Naive thymus-derived CD4-positive, alpha-beta T cell (primary cell): ENCODE measurements at regions of chr19 and their contacts with region 1.

Region 1: GRCh38 chr19:16076154-16076957 is at the start of gene TPM4:
- DNase-seq: peak; percentile 43 to 89 (median 50)
- ATAC-seq: peak; percentile 68
- H3K4me3 ChIP-seq: peak within 1 kb of the TSS; percentile 82
- H3K4me3 Mint-ChIP-seq: peak within 1 kb of the TSS; percentile 84 to 97 (median 90)
- H3K27ac ChIP-seq: peak within 1 kb of the TSS; percentile 89
- H3K27ac Mint-ChIP-seq: peak within 1 kb of the TSS; percentile 90 to 99 (median 97)
- H3K4me1 ChIP-seq: peaks cover 29 to 72% of the 10 kb centered on the region in 2 donors
- H3K4me1 Mint-ChIP-seq: peaks cover 54 to 80% (median 65%) of the 10 kb centered on the region in 7 donors
- H3K27me3 ChIP-seq: no peaks in the 10 kb centered on the region
- H3K27me3 Mint-ChIP-seq: no peaks in the 10 kb centered on the region
- total RNA-seq, gene TPM4: 65.8 to 435 (median 126) TPM

Region 2: DNA sequence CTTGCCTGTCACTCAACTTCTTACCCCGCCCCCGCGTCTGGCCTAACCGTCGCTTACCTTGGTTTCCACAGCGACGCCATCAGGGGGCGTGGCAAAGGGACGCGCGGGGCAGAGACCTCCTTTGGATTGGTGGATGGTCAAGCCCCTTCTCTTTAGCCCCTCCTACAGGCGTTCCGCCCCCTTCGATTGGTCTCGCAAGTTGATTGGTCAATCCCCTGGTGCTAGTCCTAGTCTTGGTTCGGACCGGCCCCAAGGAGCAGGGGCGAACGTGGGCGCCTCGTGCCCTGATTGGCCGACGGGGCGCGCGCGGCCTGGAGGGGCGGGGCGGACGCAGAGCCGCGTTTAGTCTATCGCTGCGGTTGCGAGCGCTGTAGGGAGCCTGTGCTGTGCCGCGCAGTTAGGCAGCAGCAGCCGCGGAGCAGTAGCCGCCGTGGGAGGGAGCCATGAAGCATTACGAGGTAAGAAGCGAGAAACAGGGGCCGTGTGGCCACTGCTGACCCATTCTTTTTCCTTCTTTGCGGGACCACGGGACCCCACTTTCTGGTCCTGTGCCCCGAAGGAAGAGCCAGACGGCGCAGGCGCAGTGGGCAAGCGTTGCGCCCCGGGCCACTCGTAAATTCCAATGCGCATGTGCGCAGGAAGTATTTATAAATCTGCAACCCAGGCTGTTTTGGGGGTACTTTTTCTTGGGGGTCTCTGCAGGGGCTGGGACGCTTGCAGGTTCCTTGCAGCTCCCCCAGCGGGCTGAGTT is 1546.9 kb before region 1 on chr19 and contains the start of gene TECR:
- CTCF ChIA-PET with region 1: no interaction called
- POLR2A ChIA-PET with region 1: no interaction called
- intact Hi-C with region 1: loop called in 1 of 2 experiments (anchors 10 kb)
- DNase-seq: peak; percentile 98 to 100 (median 100)
- ATAC-seq: peak; percentile 96
- H3K4me3 ChIP-seq: peak within 1 kb of the TSS; percentile 96
- H3K4me3 Mint-ChIP-seq: peak within 1 kb of the TSS; percentile 88 to 97 (median 95)
- H3K27ac ChIP-seq: peak within 1 kb of the TSS; percentile 89
- H3K27ac Mint-ChIP-seq: peak within 1 kb of the TSS; percentile 95 to 100 (median 98)
- H3K4me1 ChIP-seq: peaks cover 22 to 30% of the 10 kb centered on the region in 2 donors
- H3K4me1 Mint-ChIP-seq: peaks cover 9 to 72% (median 54%) of the 10 kb centered on the region in 7 donors
- H3K27me3 ChIP-seq: no peaks in the 10 kb centered on the region
- H3K27me3 Mint-ChIP-seq: no peaks in the 10 kb centered on the region
- total RNA-seq, gene TECR: 123 to 218 (median 150) TPM

Region 3: GRCh38 chr19:16088351-16089009 is 12.1 kb after region 1 on chr19:
- CTCF ChIA-PET with region 1: interaction called, 29 read pairs
- POLR2A ChIA-PET with region 1: interaction called, 128 read pairs
- intact Hi-C with region 1: loop called (anchors 1 kb)
- DNase-seq: no peak
- ATAC-seq: no peak
- H3K4me3 ChIP-seq: no peak overlapping the region
- H3K4me3 Mint-ChIP-seq: peak overlapping the region in 3 of 10 donors; percentile 23 to 35 (median 32)
- H3K27ac ChIP-seq: no peak overlapping the region
- H3K27ac Mint-ChIP-seq: peak overlapping the region in 8 of 9 donors; percentile 20 to 96 (median 68)
- H3K4me1 ChIP-seq: peaks cover 25 to 26% of the 10 kb centered on the region in 2 donors
- H3K4me1 Mint-ChIP-seq: peaks cover 25 to 63% (median 51%) of the 10 kb centered on the region in 7 donors
- H3K27me3 ChIP-seq: no peaks in the 10 kb centered on the region
- H3K27me3 Mint-ChIP-seq: no peaks in the 10 kb centered on the region

Region 4: DNA sequence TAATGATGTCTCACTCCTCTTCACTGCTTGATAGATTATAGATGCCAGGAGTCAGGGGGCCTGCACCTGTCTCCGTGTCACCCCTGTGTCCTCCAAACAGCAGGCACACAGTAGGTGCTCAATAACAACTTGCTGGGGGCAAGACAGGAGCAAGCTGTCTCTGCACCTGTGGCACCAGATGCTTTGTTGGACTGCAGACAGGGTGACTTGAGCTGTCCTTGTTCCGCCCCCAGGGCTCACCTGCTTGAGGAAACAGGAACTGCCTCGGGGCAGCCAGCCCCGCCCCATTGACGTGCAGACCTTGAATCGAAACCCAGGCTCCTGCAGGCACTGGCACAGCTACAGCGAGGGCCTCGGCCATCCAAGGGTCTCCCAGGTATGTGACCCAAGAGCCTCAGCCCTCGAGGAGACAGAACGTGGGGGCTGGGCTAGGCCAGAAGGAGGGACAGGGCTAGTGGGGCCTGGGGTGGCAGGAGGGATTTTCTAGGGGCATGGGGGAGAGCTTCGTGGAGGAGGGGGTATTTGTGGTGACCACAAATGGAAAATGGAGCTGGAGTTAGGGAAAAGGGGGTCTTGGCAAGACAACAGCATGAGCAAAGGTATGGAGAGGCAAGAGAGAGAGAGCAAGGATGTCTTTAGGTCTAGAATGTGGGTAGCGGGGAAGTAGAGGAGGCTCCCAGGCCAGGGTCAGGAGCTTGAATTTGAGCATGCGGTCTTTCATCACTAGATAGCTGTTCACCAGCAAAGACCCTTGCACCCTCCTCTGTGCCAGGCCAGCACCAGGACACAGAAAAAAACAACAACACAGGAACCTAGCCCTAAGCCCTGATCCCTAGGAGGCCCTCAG is 67.3 kb after region 1 on chr19 and contains the start of gene HSH2D:
- CTCF ChIA-PET with region 1: no interaction called
- POLR2A ChIA-PET with region 1: interaction called, 3 read pairs
- intact Hi-C with region 1: loop called in 1 of 2 experiments (anchors 2 kb)
- DNase-seq: peak; percentile 57 to 83 (median 81)
- ATAC-seq: peak; percentile 94
- H3K4me3 ChIP-seq: peak within 1 kb of the TSS; percentile 95
- H3K4me3 Mint-ChIP-seq: peak within 1 kb of the TSS; percentile 88 to 100 (median 95)
- H3K27ac ChIP-seq: peak within 1 kb of the TSS; percentile 94
- H3K27ac Mint-ChIP-seq: peak within 1 kb of the TSS; percentile 92 to 100 (median 96)
- H3K4me1 ChIP-seq: peaks cover 12 to 26% of the 10 kb centered on the region in 2 donors
- H3K4me1 Mint-ChIP-seq: peaks cover 25 to 57% (median 31%) of the 10 kb centered on the region in 7 donors
- H3K27me3 ChIP-seq: no peaks in the 10 kb centered on the region
- H3K27me3 Mint-ChIP-seq: no peaks in the 10 kb centered on the region
- total RNA-seq, gene HSH2D: 20.0 to 60.0 (median 46.4) TPM

Region 5: GRCh38 chr19:16330368-16330801 is 254.0 kb after region 1 on chr19:
- CTCF ChIA-PET with region 1: no interaction called
- POLR2A ChIA-PET with region 1: interaction called, 9 read pairs
- intact Hi-C with region 1: loop called (anchors 2 kb)
- DNase-seq: peak; percentile 76 to 96 (median 92)
- ATAC-seq: peak; percentile 74
- H3K4me3 ChIP-seq: no peak overlapping the region
- H3K4me3 Mint-ChIP-seq: peak overlapping the region; percentile 89 to 99 (median 97)
- H3K27ac ChIP-seq: peak overlapping the region; percentile 98
- H3K27ac Mint-ChIP-seq: peak overlapping the region; percentile 95 to 100 (median 98)
- H3K4me1 ChIP-seq: peaks cover 21 to 37% of the 10 kb centered on the region in 2 donors
- H3K4me1 Mint-ChIP-seq: peaks cover 17 to 62% (median 44%) of the 10 kb centered on the region in 7 donors
- H3K27me3 ChIP-seq: no peaks in the 10 kb centered on the region
- H3K27me3 Mint-ChIP-seq: peaks cover 0 to 36% (median 0%) of the 10 kb centered on the region in 5 donors